CD4-positive, alpha-beta T cell (primary cell): ENCODE measurements at regions of chr5 and their contacts with region 1.

Region 1: DNA sequence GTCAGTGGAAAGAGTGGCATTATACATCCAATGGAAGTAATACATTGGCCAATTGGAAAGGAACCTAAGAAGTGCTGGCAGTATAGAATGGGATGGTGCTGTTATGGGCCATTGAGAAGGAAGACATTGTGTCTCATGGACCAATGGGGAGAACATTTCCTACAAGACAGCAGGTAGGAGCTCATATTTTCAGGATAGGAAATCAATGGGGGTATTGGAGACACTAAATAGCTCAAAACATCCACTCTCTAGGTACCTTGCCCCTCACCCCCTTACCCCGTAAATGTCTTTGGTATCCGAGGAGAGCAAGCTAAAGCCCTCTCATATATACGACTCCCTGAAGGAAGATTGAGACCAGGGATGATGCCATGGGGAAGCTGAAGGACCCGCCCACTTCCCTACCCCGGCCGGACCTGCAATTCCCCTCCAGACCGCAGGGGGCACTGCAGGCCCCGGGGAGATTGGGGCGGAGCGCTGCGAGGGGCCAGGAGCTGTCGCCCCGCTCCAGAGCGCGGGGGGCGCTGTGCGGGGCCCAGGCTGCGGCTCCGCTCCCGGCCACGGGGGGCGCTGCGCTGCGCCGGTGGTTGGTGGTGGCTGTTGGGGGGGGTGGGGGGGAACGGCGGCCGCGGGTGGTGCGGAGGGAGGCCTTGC is at the start of gene KDM3B:
- DNase-seq: peak; percentile 82 to 97 (median 91)
- ATAC-seq: peak; percentile 83
- H3K4me3 ChIP-seq: peak within 1 kb of the TSS; percentile 99
- H3K4me3 Mint-ChIP-seq: peak within 1 kb of the TSS; percentile 95
- H3K27ac ChIP-seq: peak within 1 kb of the TSS; percentile 84 to 89
- H3K27ac Mint-ChIP-seq: peak within 1 kb of the TSS; percentile 94
- H3K4me1 ChIP-seq: peaks cover 24% of the 10 kb centered on the region
- H3K4me1 Mint-ChIP-seq: peaks cover 42% of the 10 kb centered on the region
- H3K27me3 ChIP-seq: no peaks in the 10 kb centered on the region
- H3K27me3 Mint-ChIP-seq: no peaks in the 10 kb centered on the region
- CTCF ChIP-seq: peak; percentile 90
- total RNA-seq, gene KDM3B: 59.5 to 66.0 TPM

Region 2: DNA sequence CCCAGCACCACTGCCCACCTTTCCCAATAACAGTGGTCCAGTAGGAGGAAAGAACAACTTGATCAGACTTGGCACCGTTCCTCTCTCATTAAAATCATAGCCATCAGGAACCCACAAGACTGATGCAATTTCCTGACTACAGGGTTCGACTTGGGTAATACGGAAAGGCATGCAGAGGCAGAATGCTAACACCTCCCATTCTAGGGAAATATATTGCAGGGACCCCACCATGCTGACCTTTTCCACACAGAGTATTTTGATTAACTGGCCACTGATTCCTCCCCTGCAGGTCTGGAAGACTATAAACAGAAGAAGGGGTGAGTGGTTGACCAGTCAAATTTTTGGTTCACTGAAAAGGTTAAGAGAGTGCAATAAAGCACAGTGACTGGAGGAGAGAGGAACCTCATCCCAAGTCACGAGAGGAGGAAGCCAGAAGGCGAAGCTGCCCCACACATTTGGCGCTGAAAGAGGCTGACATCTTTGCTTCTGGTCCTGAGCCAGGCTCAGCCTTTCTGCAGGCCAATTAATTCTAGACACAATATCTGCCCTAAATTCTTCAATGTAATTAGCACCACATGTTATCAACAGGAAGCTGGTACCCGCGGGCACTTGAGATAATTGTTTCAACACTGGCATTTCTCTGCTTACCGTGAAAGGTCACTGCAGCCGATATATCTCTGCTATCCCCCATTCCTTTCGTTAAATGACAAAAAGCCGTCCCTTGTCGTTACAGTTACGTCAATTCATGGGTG is 788.4 kb before region 1 on chr5:
- CTCF ChIA-PET with region 1: no interaction called
- POLR2A ChIA-PET with region 1: no interaction called
- intact Hi-C with region 1: no loop called
- DNase-seq: no peak
- ATAC-seq: no peak
- H3K4me3 ChIP-seq: no peak overlapping the region
- H3K4me3 Mint-ChIP-seq: no peak overlapping the region
- H3K27ac ChIP-seq: no peak overlapping the region
- H3K27ac Mint-ChIP-seq: no peak overlapping the region
- H3K4me1 ChIP-seq: peaks cover 3% of the 10 kb centered on the region
- H3K4me1 Mint-ChIP-seq: no peaks in the 10 kb centered on the region
- H3K27me3 ChIP-seq: peaks cover 4 to 5% of the 10 kb centered on the region in 2 experiments
- H3K27me3 Mint-ChIP-seq: peaks cover 32% of the 10 kb centered on the region
- CTCF ChIP-seq: no peak

Region 3: DNA sequence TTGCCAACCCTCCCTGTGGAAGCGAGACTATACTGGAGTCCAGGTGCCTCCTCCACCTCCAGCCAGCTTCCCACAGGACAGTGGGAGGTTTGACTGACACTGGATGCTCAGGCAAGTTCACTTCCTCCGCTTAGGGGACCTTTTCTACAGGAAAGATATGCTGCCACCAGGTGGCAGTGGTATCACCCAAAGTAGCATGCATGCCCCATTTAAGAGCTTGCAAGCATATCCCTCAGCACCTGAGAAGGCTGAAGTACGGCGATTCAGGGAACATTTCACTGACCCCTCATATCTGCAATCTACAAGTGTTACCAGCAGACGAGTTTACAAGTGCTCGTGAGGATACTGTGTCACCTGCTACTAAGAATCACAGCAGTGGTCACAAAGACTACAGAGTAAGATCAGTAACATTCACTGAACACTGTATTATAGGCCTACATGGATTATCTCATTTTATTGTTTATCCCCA is 691.8 kb before region 1 on chr5:
- CTCF ChIA-PET with region 1: interaction called, 3 read pairs
- POLR2A ChIA-PET with region 1: no interaction called
- intact Hi-C with region 1: loop called in 1 of 2 experiments (anchors 10 kb)
- DNase-seq: peak; percentile 60 to 85 (median 67)
- ATAC-seq: peak; percentile 94
- H3K4me3 ChIP-seq: no peak overlapping the region
- H3K4me3 Mint-ChIP-seq: no peak overlapping the region
- H3K27ac ChIP-seq: no peak overlapping the region
- H3K27ac Mint-ChIP-seq: peak overlapping the region; percentile 3
- H3K4me1 ChIP-seq: peaks cover 6% of the 10 kb centered on the region
- H3K4me1 Mint-ChIP-seq: peaks cover 14% of the 10 kb centered on the region
- H3K27me3 ChIP-seq: no peaks in the 10 kb centered on the region
- H3K27me3 Mint-ChIP-seq: no peaks in the 10 kb centered on the region
- CTCF ChIP-seq: peak; percentile 89

Region 4: DNA sequence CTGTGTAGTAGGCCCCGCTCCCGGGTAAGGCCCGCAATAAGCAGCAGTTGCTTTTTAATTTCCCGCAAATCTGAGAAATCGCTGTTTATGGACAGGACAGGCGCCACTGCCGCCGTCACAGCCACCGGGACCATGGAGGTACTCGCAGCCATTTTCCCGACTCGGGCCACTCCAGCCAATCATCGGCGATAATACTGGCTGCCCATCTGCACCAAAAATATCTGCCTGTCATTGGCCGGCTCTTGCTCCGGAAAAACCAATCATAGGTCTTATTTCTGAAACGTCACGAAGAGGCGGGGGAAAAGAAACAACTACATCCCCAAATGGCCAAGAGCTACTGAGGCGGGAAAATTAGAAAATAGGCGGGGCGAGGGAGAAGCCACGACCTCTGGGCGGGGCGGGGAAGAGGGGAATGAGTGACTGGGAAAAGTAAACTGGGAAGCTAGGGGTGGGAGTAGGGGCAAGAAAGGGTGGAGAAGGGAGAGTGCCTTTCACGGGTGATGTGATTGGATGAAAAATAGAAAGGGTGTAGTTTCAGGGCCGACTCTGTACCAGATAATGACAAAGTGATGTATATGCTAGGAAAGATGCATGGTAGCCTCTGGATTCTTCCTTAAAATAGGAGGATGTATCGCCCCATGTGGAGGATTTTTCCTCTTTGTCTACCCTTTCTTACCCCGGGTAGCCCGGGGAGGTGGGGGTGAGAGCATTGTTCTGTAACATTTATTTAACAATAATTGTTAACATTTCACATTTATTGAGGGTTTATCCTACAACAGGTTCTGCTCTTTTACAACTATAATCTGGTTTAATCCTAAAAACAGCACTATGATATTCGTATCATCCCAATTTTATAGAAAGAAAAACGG is 138.8 kb before region 1 on chr5 and contains the start of gene CDC23:
- CTCF ChIA-PET with region 1: interaction called, 10 read pairs
- POLR2A ChIA-PET with region 1: interaction called, 26 read pairs
- intact Hi-C with region 1: loop called (anchors 1 to 2 kb)
- DNase-seq: peak; percentile 78 to 98 (median 83)
- ATAC-seq: peak; percentile 98
- H3K4me3 ChIP-seq: peak within 1 kb of the TSS; percentile 90
- H3K4me3 Mint-ChIP-seq: peak within 1 kb of the TSS; percentile 95
- H3K27ac ChIP-seq: peak within 1 kb of the TSS; percentile 70 to 71
- H3K27ac Mint-ChIP-seq: peak within 1 kb of the TSS; percentile 91
- H3K4me1 ChIP-seq: peaks cover 23% of the 10 kb centered on the region
- H3K4me1 Mint-ChIP-seq: peaks cover 26% of the 10 kb centered on the region
- H3K27me3 ChIP-seq: peaks cover 0 to 2% of the 10 kb centered on the region in 2 experiments
- H3K27me3 Mint-ChIP-seq: peaks cover 4% of the 10 kb centered on the region
- CTCF ChIP-seq: no peak
- total RNA-seq, gene CDC23: 14.2 to 15.6 TPM

Region 5: GRCh38 chr5:138337685-138338410 is 14.3 kb before region 1 on chr5 and contains the start of gene FAM53C:
- CTCF ChIA-PET with region 1: interaction called, 248 read pairs
- POLR2A ChIA-PET with region 1: interaction called, 293 read pairs
- intact Hi-C with region 1: loop called (anchors 1 to 2 kb)
- DNase-seq: peak; percentile 82 to 96 (median 92)
- ATAC-seq: peak; percentile 81
- H3K4me3 ChIP-seq: peak within 1 kb of the TSS; percentile 62
- H3K4me3 Mint-ChIP-seq: peak within 1 kb of the TSS; percentile 94
- H3K27ac ChIP-seq: peak within 1 kb of the TSS; percentile 93 to 95
- H3K27ac Mint-ChIP-seq: peak within 1 kb of the TSS; percentile 96
- H3K4me1 ChIP-seq: peaks cover 21% of the 10 kb centered on the region
- H3K4me1 Mint-ChIP-seq: peaks cover 46% of the 10 kb centered on the region
- H3K27me3 ChIP-seq: no peaks in the 10 kb centered on the region
- H3K27me3 Mint-ChIP-seq: no peaks in the 10 kb centered on the region
- CTCF ChIP-seq: no peak
- total RNA-seq, gene FAM53C: 81.0 to 83.8 TPM

Region 6: GRCh38 chr5:138402640-138403039 is 50.4 kb after region 1 on chr5:
- CTCF ChIA-PET with region 1: interaction called, 11 read pairs
- POLR2A ChIA-PET with region 1: no interaction called
- intact Hi-C with region 1: no loop called
- DNase-seq: no peak
- ATAC-seq: no peak
- H3K4me3 ChIP-seq: no peak overlapping the region
- H3K4me3 Mint-ChIP-seq: no peak overlapping the region
- H3K27ac ChIP-seq: no peak overlapping the region
- H3K27ac Mint-ChIP-seq: no peak overlapping the region
- H3K4me1 ChIP-seq: no peaks in the 10 kb centered on the region
- H3K4me1 Mint-ChIP-seq: peaks cover 4% of the 10 kb centered on the region
- H3K27me3 ChIP-seq: no peaks in the 10 kb centered on the region
- H3K27me3 Mint-ChIP-seq: no peaks in the 10 kb centered on the region
- CTCF ChIP-seq: no peak

Region 7: GRCh38 chr5:138911441-138911840 is 559.2 kb after region 1 on chr5:
- CTCF ChIA-PET with region 1: no interaction called
- POLR2A ChIA-PET with region 1: no interaction called
- intact Hi-C with region 1: no loop called
- DNase-seq: no peak
- ATAC-seq: no peak
- H3K4me3 ChIP-seq: no peak overlapping the region
- H3K4me3 Mint-ChIP-seq: no peak overlapping the region
- H3K27ac ChIP-seq: no peak overlapping the region
- H3K27ac Mint-ChIP-seq: no peak overlapping the region
- H3K4me1 ChIP-seq: no peaks in the 10 kb centered on the region
- H3K4me1 Mint-ChIP-seq: no peaks in the 10 kb centered on the region
- H3K27me3 ChIP-seq: no peaks in the 10 kb centered on the region
- H3K27me3 Mint-ChIP-seq: no peaks in the 10 kb centered on the region
- CTCF ChIP-seq: no peak

Region 8: DNA sequence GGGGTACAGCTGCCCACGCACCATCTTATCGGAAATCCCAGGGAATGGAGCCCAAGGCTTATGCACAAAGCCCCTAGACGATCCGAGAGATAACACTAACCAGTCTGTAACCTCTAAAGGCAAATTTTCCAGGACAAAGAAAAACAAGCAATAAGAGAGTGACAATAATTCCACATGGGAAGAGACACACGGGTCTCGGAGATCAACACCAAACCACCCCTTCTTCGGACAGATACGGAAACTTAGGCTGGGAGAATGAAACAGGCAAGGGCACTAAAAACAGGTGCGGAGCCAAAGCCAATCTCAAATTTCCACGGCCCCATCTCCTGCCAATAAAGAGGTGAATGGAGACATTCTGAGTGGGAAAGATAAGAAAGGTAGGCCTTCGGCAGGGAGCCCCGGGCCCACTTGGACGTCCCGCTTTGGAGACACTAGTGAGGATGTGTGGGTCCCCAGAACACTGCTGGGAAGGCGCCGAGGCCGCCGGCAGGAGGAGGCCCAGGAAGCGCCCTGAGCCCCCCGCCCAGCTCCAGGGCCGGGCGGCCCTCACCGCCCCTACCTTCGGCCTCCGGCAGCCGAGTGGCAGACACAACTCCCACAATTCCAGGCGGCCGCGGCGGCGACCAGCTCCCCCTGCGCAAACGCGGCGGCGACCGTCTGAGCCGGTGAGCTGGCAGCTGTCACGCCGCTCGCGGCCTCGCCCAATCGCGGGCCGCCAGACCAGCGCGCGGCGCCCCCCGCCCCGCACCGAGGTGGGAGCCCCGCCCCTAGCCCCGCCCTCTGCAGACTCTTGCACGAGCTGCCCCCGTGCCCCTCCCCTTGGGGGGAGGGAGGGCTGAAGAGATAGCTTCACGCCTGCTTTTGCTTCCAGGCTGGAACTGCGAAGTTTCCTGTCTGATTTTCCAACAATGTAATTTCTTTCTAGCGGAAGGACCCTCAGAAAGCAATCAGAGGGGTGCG is 845.8 kb after region 1 on chr5 and contains the start of gene SIL1:
- CTCF ChIA-PET with region 1: no interaction called
- POLR2A ChIA-PET with region 1: no interaction called
- intact Hi-C with region 1: loop called in 1 of 2 experiments (anchors 10 kb)
- DNase-seq: peak; percentile 86 to 99 (median 96)
- ATAC-seq: peak; percentile 99
- H3K4me3 ChIP-seq: peak within 1 kb of the TSS; percentile 83
- H3K4me3 Mint-ChIP-seq: peak within 1 kb of the TSS; percentile 85
- H3K27ac ChIP-seq: peak within 1 kb of the TSS; percentile 82 to 86
- H3K27ac Mint-ChIP-seq: peak within 1 kb of the TSS; percentile 77
- H3K4me1 ChIP-seq: peaks cover 17% of the 10 kb centered on the region
- H3K4me1 Mint-ChIP-seq: peaks cover 21% of the 10 kb centered on the region
- H3K27me3 ChIP-seq: no peaks in the 10 kb centered on the region
- H3K27me3 Mint-ChIP-seq: no peaks in the 10 kb centered on the region
- CTCF ChIP-seq: no peak
- total RNA-seq, gene SIL1: 5.6 to 9.2 TPM